ENCODE measurements at regions of chr1 and their contacts with region 1.

Region 1: GRCh38 chr1:199898654-199899053 is 128.9 kb upstream of the NR5A2 start:
- DNase-seq: no peak
- H3K4me3 ChIP-seq: no peak overlapping the region
- H3K27ac ChIP-seq: no peak overlapping the region
- H3K4me1 ChIP-seq: no peaks in the 10 kb centered on the region
- H3K27me3 ChIP-seq: no peaks in the 10 kb centered on the region
- CTCF ChIP-seq: no peak

Region 2: GRCh38 chr1:199580280-199580679 is 318.4 kb before region 1 on chr1:
- CTCF ChIA-PET with region 1: no interaction called
- POLR2A ChIA-PET with region 1: interaction called, 30 read pairs
- intact Hi-C with region 1: no loop called
- DNase-seq: no peak
- H3K4me3 ChIP-seq: no peak overlapping the region
- H3K27ac ChIP-seq: no peak overlapping the region
- H3K4me1 ChIP-seq: peaks cover 12% of the 10 kb centered on the region
- H3K27me3 ChIP-seq: no peaks in the 10 kb centered on the region
- CTCF ChIP-seq: no peak

Region 3: DNA sequence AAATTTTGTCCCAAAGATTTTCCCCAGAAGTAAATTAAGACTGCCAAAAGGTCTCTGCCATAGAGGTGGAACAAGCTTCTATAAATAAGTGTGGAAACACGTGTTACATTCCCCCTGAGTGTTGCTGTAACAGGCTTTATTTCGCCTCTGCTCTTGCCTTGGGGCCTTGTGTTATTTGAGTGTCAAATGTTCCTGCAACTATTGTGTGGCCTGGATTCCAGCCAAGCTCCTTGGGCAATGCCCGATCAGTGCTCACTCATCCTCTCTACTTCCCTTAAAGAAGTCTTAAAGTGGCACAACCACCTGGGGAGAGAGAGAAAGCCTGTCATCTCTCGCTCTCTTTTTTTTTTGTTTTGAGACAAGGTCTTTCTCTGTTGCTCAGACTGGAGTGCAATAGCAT is 285.5 kb after region 1 on chr1:
- CTCF ChIA-PET with region 1: interaction called, 12 read pairs
- POLR2A ChIA-PET with region 1: no interaction called
- intact Hi-C with region 1: no loop called
- DNase-seq: peak; percentile 90 to 96
- H3K4me3 ChIP-seq: no peak overlapping the region
- H3K27ac ChIP-seq: peak overlapping the region; percentile 42
- H3K4me1 ChIP-seq: peaks cover 47% of the 10 kb centered on the region
- H3K27me3 ChIP-seq: no peaks in the 10 kb centered on the region
- CTCF ChIP-seq: no peak

Measured in PC-9 (cell line).